ENCODE measurements at regions of chr5 and their contacts with region 1.

Region 1: DNA sequence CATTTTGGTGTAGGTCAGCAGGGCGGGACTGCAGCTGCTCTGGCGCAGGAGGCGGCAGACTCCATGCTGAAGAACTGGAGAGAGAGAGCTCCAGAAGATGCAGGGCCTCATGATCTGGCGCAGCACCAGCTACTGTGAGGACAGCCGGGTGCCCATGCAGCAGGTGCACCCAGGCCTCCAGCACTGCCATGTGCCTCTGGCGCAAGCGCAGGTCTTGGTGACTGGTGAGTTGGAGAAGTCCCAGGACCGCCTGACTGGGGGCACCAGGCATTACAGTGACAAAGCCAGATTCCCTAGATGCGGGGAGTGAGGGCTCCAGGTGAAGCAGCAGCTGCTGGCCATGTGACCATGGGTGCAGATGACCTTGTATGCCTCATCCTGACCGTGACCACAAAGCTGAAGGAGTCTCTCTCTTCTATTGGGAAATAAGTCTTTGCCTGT is 24.3 kb upstream of the EXOC3 start:
- DNase-seq: peak; percentile 17
- ATAC-seq: no peak
- H3K4me3 Mint-ChIP-seq: no peak overlapping the region
- H3K27ac Mint-ChIP-seq: no peak overlapping the region
- H3K4me1 Mint-ChIP-seq: peaks cover 18% of the 10 kb centered on the region
- H3K27me3 Mint-ChIP-seq: no peaks in the 10 kb centered on the region; the same call in 1 of the 2 replicates
- CTCF ChIP-seq: no peak

Region 2: DNA sequence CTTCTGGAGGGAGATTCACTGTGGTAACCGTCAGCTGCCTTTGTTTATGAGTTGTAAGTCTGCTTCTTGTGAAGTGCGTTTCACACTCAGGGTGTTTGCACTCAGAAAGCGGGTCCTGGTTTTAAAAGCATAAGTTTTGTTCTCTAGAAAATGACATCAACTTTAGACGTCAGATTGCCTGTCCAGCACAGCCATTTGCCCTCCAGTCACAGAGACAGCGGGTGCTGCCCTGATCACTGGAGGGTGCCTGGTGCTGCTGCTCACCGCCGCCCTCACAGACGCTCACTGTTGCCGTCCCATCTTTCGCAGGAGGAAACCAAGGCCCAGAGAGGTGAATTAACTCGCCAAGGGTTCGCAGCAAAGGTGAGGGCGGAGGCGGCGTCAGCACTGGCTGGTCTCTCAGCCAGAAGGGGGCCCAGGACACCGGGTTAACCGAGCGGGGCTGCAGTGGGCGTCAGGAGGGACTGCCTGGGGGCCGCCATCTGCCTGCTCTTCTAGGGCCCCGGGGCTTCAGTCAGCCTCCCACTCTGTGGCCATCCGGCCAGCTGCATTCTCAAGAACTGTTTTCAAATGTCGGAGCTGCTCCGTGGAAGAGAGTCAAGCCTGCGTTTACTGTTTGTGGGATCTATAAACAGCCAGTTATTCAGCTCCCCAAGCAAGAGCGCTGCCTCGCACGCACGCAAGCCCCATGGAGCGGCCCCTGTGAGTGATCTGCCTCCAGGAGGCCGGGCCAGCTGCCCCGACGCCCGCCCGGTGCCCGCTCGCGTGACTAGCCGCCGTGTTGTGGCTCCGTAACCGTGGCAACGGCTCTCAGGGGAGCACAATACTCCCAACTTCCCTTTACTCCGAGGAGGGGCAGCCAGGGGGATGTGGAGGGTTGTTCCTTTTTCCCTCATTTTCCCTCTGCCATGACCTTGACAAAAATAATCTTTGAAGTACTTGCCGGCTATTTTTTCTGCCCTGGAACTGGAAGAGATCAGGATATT is 19.1 kb before region 1 on chr5:
- CTCF ChIA-PET with region 1: interaction called, 38 read pairs
- POLR2A ChIA-PET with region 1: interaction called, 3 read pairs
- DNase-seq: peak; percentile 89
- ATAC-seq: peak; percentile 75
- H3K4me3 Mint-ChIP-seq: peak overlapping the region; percentile 44
- H3K27ac Mint-ChIP-seq: peak overlapping the region; percentile 26; the same call in 1 of the 2 replicates
- H3K4me1 Mint-ChIP-seq: peaks cover 12% of the 10 kb centered on the region
- H3K27me3 Mint-ChIP-seq: peaks cover 19% of the 10 kb centered on the region
- CTCF ChIP-seq: no peak